Right ventricle myocardium superior (tissue), 1 donor: ENCODE measurements at regions of chr5 and their contacts with region 1.

Region 1: DNA sequence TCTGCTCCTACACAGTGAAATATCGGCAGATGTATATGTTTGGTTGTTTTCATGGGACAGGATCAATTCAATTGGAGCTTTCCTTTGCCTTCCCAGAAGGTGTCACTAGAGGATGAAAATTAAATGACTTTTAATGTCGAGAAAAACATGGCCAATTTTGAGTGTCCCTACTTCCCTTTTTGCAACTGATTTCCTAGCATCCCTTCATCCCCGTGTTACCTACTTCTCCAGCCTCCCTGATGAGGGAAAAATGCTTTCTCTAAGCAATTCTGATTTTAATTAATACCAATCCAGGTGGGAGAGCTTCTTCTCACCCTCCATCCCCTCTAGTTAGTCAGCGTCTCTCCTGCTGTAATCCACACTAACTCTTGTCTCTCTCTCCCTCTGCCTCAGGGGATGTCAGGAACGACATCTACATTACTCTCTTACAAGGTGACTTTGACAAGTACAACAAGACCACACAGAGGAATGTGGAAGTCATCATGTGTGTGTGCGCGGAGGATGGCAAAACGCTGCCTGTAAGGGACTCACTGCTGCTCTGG is 64.9 kb downstream of the DOCK2 start:
- DNase-seq: no peak
- ATAC-seq: peak; percentile 60

Region 2: GRCh38 chr5:169350759-169351240 is 351.2 kb before region 1 on chr5:
- intact Hi-C with region 1: no loop called
- DNase-seq: no peak
- ATAC-seq: peak; percentile 56

Region 3: DNA sequence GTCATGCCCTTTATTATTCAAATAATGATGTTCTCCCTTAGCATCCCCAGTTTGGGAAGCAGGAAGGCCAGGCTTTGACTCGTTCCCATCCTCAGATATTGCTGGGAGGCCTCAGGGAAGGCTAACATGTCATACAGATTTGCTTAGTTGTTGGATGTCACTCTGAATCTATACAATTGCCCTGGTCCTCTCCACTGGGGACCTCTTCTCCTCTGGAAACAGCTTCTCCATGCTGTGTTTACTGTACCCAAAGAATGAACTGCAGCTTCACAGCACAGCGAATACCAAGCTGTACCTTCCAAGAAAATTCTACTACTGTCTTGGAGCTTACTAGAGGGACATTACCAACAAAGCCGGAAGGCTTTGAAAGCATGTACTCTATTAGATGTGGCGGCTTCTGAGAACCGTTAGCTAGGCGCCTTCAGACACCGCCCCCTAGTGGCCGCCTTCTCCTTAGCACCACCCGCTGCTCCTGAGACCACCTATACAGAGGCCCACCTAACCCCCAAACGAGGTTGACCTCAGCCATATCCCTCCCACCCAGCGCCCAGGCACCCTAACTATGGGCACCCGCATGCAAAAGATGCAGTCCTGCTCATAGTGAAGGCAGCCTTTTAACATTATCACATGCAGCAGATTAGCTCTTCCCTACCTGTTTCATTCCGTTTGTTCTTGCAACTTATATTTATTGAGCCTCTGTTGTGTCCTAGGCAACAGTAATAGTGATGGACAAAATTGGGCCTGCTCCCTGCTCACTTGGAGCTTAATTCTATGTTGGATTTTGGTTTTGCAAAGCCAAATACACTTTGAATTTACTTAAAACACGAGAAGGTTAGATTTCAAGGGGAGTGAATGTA is 368.8 kb after region 1 on chr5:
- intact Hi-C with region 1: loop called (anchors 2 kb)
- DNase-seq: peak; percentile 61
- ATAC-seq: peak; percentile 66